Left colon (tissue), 2 donors: ENCODE measurements at regions of chr7 and their contacts with region 1.

Region 1: DNA sequence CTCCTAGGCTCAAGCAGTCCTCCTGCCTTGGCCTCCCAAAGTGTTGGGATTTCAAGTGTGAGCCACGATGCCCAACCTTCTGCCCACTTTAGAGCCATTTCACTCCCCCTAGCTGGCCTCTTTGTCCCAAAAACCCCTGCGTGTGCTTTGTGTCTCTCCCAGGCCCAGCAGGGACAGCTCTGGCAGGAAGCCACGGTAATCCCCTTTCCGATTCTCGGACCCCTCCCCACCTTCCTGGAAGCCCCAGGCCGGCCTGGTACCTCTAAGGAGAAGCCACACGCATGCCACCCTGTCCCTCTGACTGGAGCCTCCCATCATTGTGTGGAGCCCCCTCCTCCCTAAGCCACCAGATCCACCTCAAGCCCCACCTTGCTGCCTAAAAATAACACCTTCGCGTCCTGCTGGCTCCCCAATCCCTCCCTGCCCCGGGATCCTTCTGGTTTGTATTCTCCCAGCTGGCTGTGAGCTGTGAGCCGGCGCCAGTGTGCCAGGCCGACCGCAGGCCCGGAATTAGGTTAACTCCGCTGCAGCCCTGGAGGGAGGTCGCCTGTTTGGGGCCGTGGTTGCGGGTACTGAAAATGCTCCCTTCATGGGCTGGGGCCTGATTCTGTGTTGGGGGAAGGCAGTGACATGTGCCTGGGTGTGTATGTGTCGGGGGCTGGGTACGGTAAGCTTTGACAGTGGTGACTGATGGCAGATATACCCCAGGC is 16.4 kb upstream of the SRRM3 start:
- DNase-seq: no peak
- ATAC-seq: no peak

Region 2: DNA sequence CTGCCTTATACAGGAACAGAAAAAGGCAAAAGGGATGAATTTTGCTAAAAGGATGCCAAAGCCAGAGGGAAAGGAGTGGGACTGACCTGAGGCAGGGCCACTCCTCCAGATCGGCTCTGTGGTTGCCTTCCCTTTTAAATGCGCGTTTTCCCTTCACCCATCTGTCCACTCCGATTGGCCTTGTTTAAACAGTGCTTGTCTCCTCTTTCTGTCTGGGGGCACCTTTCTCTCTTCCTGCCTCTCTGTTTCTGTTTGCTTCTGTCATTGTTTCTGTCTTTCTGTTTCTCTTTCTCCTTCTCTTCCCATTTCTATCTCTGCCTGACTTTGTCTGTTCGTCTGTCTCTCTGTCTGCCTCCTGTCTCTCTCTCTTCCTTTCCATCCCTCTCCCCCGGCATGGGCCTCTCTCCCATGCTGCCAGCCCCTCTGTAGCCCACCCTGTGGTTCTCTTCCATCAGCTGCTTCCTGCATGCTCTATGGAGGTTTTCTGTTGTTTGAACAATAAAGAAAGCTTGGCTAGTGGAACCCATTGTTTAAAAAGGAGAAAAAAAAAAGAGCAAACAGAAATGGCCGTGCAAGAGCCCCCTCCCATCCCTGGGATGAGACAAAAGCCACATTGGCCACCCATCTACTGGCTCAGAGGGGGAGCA is 87.6 kb after region 1 on chr7:
- intact Hi-C with region 1: loop called in 1 of 2 experiments (anchors 5 kb)
- DNase-seq: no peak
- ATAC-seq: no peak